ENCODE measurements at regions of chr15 and their contacts with region 1.

Region 1: DNA sequence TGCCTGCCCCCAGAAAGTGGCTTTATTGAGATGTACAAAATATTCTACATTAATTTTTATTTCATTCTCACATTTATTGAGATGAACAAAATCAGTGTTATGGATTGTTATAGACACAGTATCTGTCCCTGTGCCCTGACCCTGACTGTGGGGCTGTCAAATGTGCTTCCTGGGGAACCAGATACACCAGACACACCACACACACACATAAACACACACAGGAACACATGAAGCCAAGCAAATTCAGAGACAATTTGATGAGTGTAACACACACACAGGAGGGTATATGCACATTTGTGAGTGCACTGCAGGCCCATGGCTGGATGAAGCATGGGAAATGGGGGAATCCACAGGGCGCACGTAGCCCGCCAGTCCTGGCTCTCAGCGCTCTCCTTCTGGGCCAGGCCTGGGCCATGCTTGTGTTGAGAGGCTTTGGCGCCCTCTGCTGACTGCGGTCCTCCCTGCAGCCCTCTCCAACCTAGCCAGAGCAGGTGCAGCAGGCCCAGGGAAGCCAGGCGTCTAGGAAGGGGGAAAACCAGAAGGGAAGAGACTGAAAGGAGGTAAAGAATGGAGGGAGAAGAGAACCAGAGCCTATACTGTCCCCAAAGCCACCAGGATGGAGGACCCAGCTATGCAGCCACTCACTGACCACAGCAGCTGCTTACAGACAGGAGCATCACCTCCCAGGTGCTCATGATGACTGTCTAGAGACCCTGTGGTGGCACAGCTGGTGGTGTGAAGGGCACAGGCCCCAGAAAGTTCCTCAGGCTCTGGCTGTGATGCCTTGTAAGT is 18.0 kb upstream of the LOXL1 start:
- DNase-seq: peak; percentile 78
- H3K4me3 ChIP-seq: no peak overlapping the region
- H3K27ac ChIP-seq: no peak overlapping the region
- H3K4me1 ChIP-seq: no peaks in the 10 kb centered on the region
- H3K27me3 ChIP-seq: no peaks in the 10 kb centered on the region
- CTCF ChIP-seq: peak; percentile 85

Region 2: GRCh38 chr15:73873889-73874511 is 34.2 kb before region 1 on chr15:
- intact Hi-C with region 1: loop called (anchors 5 kb)
- DNase-seq: peak; percentile 24
- H3K4me3 ChIP-seq: no peak overlapping the region
- H3K27ac ChIP-seq: no peak overlapping the region
- H3K4me1 ChIP-seq: no peaks in the 10 kb centered on the region
- H3K27me3 ChIP-seq: no peaks in the 10 kb centered on the region
- CTCF ChIP-seq: peak; percentile 58

Region 3: DNA sequence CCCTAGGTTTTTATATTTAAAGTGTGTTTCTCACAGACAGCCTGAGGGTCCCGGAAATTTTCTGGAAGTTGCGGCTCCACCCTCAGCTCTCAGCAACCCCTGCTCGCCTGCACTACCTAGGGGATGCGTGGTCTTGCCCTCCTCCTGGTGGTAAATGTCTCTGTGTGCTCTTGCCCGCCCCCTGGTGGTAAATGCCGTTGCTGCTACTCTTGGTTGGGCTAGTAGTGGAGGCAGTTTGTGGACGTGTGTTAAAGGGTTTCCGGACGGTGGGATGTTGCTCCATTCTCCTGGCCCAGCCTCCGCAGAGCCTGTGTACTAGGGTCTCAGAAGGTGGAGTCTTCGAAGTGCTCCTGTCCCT is 56.5 kb after region 1 on chr15:
- intact Hi-C with region 1: no loop called
- DNase-seq: peak; percentile 84
- H3K4me3 ChIP-seq: no peak overlapping the region
- H3K27ac ChIP-seq: no peak overlapping the region
- H3K4me1 ChIP-seq: no peaks in the 10 kb centered on the region
- H3K27me3 ChIP-seq: no peaks in the 10 kb centered on the region
- CTCF ChIP-seq: peak; percentile 88

Measured in colonic mucosa (tissue), 4 donors.